Mammary epithelial cell (primary cell): ENCODE measurements at regions of chr16 and their contacts with region 1.

Region 1: DNA sequence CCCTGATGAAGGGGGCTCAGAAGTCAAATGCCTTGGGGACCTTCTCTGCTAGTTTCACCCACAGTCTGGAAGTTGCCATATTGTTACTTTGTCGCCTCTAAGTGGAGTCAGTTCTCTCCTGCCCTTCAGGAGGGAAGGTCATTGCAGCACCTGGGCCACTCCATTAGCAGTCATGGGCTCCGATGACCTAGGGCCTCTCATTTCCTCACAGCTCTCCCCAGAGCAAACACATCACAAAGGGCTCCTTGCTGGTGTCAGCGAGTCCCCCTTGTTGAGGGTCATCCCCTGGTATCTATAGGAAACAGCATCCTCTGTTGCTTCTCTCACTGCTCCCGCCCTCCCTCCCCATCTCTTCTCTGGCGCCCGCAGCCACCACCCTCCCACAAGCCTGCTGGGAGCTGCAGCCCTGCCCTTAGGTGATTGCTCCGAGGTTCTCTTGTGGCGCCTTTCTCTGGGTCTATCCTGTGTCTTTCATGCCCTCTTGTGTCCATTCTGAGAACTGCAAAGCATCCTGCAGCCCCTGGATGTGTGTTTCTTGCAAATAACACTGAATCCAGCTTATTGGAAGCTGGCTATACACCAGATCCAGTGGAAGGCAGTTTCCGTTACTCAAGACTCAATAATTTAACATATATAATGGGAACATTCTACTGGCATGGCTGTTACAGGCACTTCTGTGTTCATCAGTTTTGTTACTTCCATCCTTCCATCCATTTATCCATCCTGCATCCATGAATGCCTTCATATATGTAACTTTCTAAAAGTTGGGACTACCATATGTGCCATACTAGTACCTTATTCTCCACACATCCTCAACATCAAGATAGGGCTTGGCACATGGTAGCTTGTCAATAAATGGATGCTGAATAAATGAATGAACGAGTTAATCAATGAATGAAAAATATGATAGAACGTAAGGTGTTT is 21.2 kb downstream of the PDILT start:
- DNase-seq: peak; percentile 30
- H3K4me3 ChIP-seq: no peak overlapping the region
- H3K27ac ChIP-seq: no peak overlapping the region
- H3K4me1 ChIP-seq: no peaks in the 10 kb centered on the region
- H3K27me3 ChIP-seq: no peaks in the 10 kb centered on the region
- CTCF ChIP-seq: peak; percentile 84 to 85

Region 2: DNA sequence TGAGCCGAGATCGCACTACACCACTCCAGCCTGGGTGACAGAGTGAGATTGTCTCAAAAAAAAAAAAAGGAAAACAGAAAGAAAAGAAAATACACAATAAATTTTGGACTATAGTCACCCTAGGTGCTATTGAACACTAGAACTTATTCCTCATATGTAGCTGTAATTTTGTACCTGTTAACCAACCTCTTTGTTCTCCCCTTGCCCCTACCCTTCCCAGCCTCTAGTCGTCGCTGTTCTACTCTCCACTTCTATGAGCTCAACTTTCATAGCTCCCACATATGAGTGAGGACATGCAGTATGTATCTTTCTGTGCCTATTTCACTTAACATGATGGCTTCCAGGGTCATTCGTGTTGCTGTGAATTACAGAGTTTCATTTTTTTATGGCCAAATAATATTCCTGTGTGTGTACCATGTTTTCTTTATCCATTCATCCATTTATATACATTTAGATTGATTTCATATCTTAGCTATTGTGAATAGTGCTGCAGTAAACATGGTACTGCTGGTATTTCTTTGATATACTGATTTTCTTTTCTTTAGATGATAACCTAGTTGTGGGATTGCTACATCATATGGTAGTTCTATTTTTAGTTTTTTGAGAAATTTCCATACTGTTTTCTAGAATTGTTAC is 799.6 kb before region 1 on chr16:
- CTCF ChIA-PET with region 1: no interaction called
- dilution Hi-C with region 1: no loop called
- in situ Hi-C with region 1: loop called in 1 of 2 experiments (anchors 25 kb)
- intact Hi-C with region 1: no loop called
- DNase-seq: peak; percentile 43
- H3K4me3 ChIP-seq: no peak overlapping the region
- H3K27ac ChIP-seq: no peak overlapping the region
- H3K4me1 ChIP-seq: no peaks in the 10 kb centered on the region
- H3K27me3 ChIP-seq: no peaks in the 10 kb centered on the region
- CTCF ChIP-seq: peak; percentile 91 to 93

Region 3: DNA sequence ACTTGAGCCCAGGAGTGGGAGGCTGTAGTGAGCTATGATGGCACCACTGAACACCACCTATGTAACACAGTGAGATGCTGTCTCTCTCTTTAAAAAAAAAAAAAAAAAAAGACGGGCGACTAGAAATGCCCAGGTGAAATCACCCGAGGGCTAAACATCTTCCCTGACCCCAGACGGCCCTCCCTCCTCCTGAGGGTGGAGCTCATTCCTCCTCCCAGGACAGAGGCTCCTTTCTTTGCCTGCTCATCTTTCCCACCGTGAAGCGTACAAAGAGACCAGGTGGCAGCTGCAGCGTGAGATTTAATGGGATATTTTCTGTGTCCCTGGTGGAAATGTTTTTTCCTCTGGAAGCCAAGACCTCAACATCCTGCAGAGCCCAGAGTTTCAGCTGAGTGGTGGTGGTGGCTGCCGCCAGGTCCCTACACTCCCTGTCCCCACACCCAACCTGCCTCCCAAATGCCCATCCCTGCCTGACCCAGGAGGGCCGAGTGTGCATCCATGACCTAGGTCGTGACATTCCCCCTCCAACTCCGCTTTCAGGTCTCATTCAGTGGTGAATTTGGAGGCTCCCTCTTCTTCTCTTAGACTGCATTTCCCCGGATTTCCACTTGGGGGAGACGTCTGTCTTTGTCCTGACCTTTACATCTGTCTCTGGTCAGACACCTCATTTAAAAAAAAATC is 484.3 kb before region 1 on chr16:
- CTCF ChIA-PET with region 1: interaction called, 3 read pairs
- dilution Hi-C with region 1: no loop called
- in situ Hi-C with region 1: loop called (anchors 5 to 10 kb)
- intact Hi-C with region 1: loop called (anchors 1 kb)
- DNase-seq: peak; percentile 46
- H3K4me3 ChIP-seq: no peak overlapping the region
- H3K27ac ChIP-seq: no peak overlapping the region
- H3K4me1 ChIP-seq: peaks cover 4% of the 10 kb centered on the region
- H3K27me3 ChIP-seq: no peaks in the 10 kb centered on the region
- CTCF ChIP-seq: peak; percentile 78 to 82

Region 4: GRCh38 chr16:20300312-20301097 is 82.9 kb before region 1 on chr16:
- CTCF ChIA-PET with region 1: interaction called, 16 read pairs
- dilution Hi-C with region 1: no loop called
- in situ Hi-C with region 1: no loop called
- intact Hi-C with region 1: loop called (anchors 5 kb)
- DNase-seq: peak; percentile 42
- H3K4me3 ChIP-seq: no peak overlapping the region
- H3K27ac ChIP-seq: no peak overlapping the region
- H3K4me1 ChIP-seq: no peaks in the 10 kb centered on the region
- H3K27me3 ChIP-seq: no peaks in the 10 kb centered on the region
- CTCF ChIP-seq: peak; percentile 70 to 86

Region 5: DNA sequence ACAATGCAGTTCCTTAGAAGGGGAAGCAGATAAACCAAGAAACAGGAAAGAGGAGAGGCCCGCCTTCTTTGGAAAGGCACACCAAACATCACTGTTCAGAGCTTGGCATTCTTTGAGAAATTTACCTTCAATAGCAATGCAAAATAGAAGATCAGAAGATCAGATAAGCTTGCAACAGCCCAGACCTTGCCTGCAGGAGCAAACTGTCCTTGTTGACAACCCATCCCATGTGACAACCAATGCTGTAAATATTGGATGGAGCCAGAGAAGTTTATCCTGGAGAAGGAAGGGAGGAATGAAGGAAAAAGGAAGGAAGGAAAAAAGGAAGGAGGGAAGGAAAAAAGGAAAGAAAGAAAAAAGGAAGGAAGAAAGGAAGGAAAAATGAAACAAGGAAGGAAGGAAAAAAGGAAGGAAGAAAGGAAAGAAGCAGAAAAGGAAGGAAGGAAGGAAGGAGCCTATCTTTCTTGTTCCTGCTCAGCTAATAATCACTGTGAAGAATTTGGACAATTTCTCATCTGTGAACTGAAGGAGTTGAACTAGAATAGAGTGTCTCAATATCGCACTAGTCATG is 136.6 kb after region 1 on chr16:
- CTCF ChIA-PET with region 1: no interaction called
- dilution Hi-C with region 1: no loop called
- in situ Hi-C with region 1: no loop called
- intact Hi-C with region 1: no loop called
- DNase-seq: no peak
- H3K4me3 ChIP-seq: no peak overlapping the region
- H3K27ac ChIP-seq: no peak overlapping the region
- H3K4me1 ChIP-seq: no peaks in the 10 kb centered on the region
- H3K27me3 ChIP-seq: no peaks in the 10 kb centered on the region
- CTCF ChIP-seq: no peak